Natural killer cell (primary cell): ENCODE measurements at regions of chr12 and their contacts with region 1.

Region 1: DNA sequence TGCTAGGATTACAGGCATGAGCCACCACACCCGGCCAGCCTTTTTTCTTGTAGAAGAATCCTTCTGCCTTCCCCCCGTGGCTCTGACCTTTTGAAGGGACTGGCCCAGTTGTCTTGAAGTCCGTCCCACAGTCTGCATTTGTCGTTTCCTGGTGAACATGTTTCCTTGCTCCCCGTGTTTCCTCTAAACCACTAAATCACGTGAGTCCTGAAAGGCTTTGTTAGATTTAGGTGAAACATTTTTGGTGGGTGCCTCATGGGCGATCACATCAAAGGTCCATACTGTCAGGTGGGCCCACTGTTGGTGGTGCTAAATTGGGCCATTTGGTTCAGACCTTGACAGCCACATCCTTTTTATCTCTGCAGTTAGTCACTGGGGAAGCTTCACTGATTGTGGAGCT is 26.3 kb downstream of the MLXIP start:
- DNase-seq: peak in 1 of 2 donors; percentile 44
- ATAC-seq: peak in 2 of 3 donors; percentile 57 to 78
- H3K4me3 ChIP-seq: no peak overlapping the region
- H3K4me3 Mint-ChIP-seq: peak overlapping the region; percentile 9
- H3K27ac ChIP-seq: no peak overlapping the region
- H3K27ac Mint-ChIP-seq: peak overlapping the region; percentile 57 to 80
- H3K4me1 ChIP-seq: peaks cover 45% of the 10 kb centered on the region
- H3K4me1 Mint-ChIP-seq: peaks cover 50 to 74% of the 10 kb centered on the region in 2 donors
- H3K27me3 ChIP-seq: no peaks in the 10 kb centered on the region
- H3K27me3 Mint-ChIP-seq: no peaks in the 10 kb centered on the region
- CTCF ChIP-seq: no peak

Region 2: DNA sequence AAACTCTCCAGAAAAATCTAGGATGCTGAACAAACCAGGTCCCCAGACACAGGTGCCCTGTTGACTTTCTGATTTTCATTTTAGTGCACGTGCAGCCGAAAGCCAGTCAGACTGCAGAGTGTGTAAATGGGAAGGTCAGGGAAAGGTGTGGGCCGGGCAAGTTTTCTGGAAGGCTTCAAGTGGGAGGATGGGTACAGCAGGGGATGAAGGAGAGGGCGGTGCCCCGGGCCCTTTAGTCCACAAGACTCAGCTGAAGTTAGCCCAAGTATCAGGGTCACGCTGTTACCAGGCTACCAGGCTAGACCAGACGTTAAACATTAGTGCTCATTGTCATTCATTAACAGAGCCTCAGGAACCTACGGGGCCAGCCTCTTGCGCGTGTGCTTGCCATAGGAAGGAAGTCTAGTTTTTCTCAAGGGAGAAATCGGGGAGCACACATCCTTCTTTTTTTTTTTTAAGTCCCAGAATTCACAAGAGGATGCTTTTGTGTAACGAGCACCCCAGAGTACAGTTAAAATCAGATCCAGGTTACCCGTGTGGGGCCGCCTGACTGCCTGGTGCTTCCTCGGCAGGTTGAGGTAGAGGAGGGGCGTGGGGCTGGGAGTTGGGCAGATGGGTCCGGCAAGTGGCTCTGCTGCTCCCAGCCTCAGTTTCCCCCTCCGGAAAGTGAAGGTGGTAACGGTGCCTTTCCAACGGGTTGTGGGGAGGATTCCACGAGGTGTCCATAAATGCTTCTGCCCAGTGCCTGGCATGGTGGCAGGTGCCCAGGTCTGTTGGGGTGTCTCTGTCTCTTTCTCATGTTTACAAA is 64.1 kb before region 1 on chr12:
- intact Hi-C with region 1: no loop called
- DNase-seq: no peak
- ATAC-seq: no peak
- H3K4me3 ChIP-seq: no peak overlapping the region
- H3K4me3 Mint-ChIP-seq: no peak overlapping the region
- H3K27ac ChIP-seq: no peak overlapping the region
- H3K27ac Mint-ChIP-seq: no peak overlapping the region
- H3K4me1 ChIP-seq: no peaks in the 10 kb centered on the region
- H3K4me1 Mint-ChIP-seq: no peaks in the 10 kb centered on the region
- H3K27me3 ChIP-seq: no peaks in the 10 kb centered on the region
- H3K27me3 Mint-ChIP-seq: no peaks in the 10 kb centered on the region
- CTCF ChIP-seq: no peak

Region 3: DNA sequence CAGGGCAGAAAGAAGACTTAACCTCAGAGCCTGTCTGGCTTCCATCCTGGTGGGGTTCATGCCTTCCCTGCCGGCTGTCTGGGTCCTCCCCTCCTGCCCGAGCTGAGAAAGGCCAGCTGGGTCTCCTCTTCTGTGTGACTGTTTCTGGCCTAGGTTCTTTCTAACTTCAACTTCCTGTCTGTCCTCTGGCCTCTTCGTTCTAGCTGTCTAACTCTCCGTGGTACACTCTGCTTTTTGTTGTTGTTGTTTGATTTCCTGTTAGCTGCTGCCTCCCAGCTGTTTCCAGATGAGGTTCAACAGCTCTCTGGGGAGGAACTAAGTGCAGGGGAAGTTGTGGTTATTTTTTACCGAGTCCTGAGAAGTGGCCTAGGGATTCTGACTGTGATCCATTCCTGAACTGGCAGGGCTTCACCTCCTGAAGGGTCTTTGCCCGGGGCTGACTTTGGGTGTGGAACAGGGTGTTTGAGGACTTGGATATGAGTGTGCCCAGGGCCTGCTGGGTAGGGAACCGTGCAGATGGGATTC is 23.1 kb before region 1 on chr12:
- intact Hi-C with region 1: loop called (anchors 2 kb)
- DNase-seq: peak in 1 of 2 donors; percentile 74
- ATAC-seq: peak; percentile 16 to 47 (median 18)
- H3K4me3 ChIP-seq: peak overlapping the region; percentile 18
- H3K4me3 Mint-ChIP-seq: peak overlapping the region; percentile 72
- H3K27ac ChIP-seq: peak overlapping the region; percentile 77
- H3K27ac Mint-ChIP-seq: peak overlapping the region; percentile 79 to 86
- H3K4me1 ChIP-seq: peaks cover 76% of the 10 kb centered on the region
- H3K4me1 Mint-ChIP-seq: peaks cover 66 to 72% of the 10 kb centered on the region in 2 donors
- H3K27me3 ChIP-seq: no peaks in the 10 kb centered on the region
- H3K27me3 Mint-ChIP-seq: no peaks in the 10 kb centered on the region
- CTCF ChIP-seq: no peak